Dorsolateral prefrontal cortex (tissue), 120 donors: ENCODE measurements at regions of chr3 and their contacts with region 1.

Region 1: DNA sequence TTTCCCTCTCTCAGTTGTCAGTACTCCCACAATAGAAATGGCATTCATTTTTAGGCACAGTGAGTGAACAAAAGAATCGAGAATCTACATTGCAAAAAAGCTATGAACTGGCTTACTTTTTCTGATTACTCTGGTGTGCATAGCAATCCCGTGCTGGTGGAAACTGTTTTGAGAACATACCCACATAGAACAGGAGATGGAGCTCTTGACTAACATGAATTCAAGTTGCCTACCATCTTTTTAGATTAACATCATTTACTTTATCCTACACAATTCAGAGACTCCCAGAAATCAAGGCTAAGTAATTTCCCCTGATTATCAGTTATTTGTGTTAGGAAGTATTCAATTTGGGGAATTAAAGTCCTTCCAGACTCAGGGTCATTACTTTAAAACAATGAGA is 326.6 kb downstream of the ARPP21 start:
- DNase-seq: peak in 1 of 10 donors; percentile 15
- H3K4me3 ChIP-seq: no peak overlapping the region
- H3K27ac ChIP-seq: no peak overlapping the region
- H3K27me3 ChIP-seq: peaks cover 0 to 7% (median 0%) of the 10 kb centered on the region in 45 donors
- CTCF ChIP-seq: peak in 55 of 56 donors; percentile 14 to 82 (median 67)

Region 2: DNA sequence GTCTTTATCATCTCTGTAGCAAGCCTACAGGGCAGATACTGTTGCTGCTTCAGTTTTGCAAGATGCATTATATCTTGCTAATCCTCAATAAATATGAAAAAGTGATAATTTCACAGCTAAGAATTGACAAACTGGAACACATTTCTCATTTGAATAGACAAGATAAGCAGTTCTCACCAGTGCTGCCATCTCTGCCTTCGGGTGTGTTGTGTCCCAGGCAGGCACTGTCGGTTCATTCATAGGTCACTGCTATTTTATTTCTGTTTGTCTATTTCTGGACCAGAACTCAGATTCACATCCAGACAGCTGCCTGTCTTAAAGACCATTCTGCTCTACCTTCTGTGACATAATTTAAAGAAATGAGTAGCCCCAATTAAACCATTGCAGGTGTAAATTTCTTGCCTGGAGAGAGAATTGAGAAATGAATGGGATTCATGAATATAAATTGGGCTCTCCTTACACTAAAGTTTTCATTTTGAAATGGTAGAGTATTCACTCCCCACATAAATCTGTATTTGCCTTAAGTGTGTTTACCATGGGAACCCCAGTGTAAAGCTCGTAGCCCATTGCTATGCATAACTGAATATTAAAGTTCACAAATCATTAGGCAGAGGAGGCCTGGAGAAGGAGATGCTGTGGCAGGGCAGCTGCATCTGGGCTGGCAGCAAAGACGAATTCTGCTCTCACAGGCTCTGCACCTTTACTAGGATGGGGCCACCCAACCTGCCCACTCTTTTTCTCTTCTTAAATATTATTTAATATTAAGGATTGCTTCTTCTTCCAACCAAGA is 176.7 kb before region 1 on chr3:
- intact Hi-C with region 1: no loop called
- DNase-seq: peak in 1 of 10 donors; percentile 15
- H3K4me3 ChIP-seq: no peak overlapping the region
- H3K27ac ChIP-seq: peak overlapping the region in 12 of 59 donors; percentile 5 to 53 (median 24)
- H3K27me3 ChIP-seq: no peaks in the 10 kb centered on the region
- CTCF ChIP-seq: no peak

Region 3: GRCh38 chr3:35932995-35933394 is 32.9 kb before region 1 on chr3:
- intact Hi-C with region 1: no loop called
- DNase-seq: peak in 2 of 10 donors; percentile 10 to 53
- H3K4me3 ChIP-seq: peak overlapping the region in 2 of 59 donors; percentile 8 to 11
- H3K27ac ChIP-seq: peak overlapping the region in 51 of 59 donors; percentile 10 to 89 (median 65)
- H3K27me3 ChIP-seq: no peaks in the 10 kb centered on the region
- CTCF ChIP-seq: peak in 4 of 56 donors; percentile 7 to 31 (median 13)

Region 4: GRCh38 chr3:36700537-36701248 is 734.8 kb after region 1 on chr3:
- intact Hi-C with region 1: loop called (anchors 5 kb)
- DNase-seq: peak; percentile 33 to 74 (median 64)
- H3K4me3 ChIP-seq: no peak overlapping the region
- H3K27ac ChIP-seq: no peak overlapping the region
- H3K27me3 ChIP-seq: peaks cover 0 to 3% (median 0%) of the 10 kb centered on the region in 45 donors
- CTCF ChIP-seq: peak; percentile 35 to 90 (median 77)

Region 5: GRCh38 chr3:36868614-36869436 is 902.9 kb after region 1 on chr3:
- intact Hi-C with region 1: loop called in 1 of 2 experiments (anchors 10 kb)
- DNase-seq: peak in 5 of 10 donors; percentile 38 to 59 (median 44)
- H3K4me3 ChIP-seq: peak overlapping the region in 1 of 59 donors; percentile 15
- H3K27ac ChIP-seq: no peak overlapping the region
- H3K27me3 ChIP-seq: no peaks in the 10 kb centered on the region
- CTCF ChIP-seq: peak; percentile 54 to 97 (median 84)